PC-3 (cell line): ENCODE measurements at regions of chr1 and their contacts with region 1.

Region 1: DNA sequence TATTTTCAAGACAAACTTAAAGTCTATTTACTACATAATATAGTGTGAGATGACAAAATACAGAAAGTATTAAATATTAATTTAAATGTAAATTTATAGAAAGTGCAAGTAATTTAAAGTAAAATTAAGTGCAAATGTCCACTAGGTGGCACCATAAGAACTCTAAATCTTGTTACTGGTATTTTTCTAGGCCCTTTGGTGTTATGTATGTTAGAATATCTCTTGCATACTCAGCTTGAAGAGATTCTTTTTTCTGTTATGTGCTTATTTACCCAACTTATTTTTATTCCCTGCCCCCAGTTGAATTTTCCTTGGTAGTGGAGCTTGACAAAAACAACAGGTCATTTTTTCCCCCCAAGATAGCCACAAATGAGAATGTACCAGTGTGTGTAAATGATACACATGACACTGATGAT is 71.5 kb downstream of the RPS6KC1 start:
- DNase-seq: peak; percentile 89
- ATAC-seq: no peak
- H3K4me3 ChIP-seq: no peak overlapping the region
- H3K27ac ChIP-seq: no peak overlapping the region
- H3K4me1 ChIP-seq: peaks cover 62% of the 10 kb centered on the region
- H3K27me3 ChIP-seq: no peaks in the 10 kb centered on the region
- CTCF ChIP-seq: peak; percentile 74

Region 2: DNA sequence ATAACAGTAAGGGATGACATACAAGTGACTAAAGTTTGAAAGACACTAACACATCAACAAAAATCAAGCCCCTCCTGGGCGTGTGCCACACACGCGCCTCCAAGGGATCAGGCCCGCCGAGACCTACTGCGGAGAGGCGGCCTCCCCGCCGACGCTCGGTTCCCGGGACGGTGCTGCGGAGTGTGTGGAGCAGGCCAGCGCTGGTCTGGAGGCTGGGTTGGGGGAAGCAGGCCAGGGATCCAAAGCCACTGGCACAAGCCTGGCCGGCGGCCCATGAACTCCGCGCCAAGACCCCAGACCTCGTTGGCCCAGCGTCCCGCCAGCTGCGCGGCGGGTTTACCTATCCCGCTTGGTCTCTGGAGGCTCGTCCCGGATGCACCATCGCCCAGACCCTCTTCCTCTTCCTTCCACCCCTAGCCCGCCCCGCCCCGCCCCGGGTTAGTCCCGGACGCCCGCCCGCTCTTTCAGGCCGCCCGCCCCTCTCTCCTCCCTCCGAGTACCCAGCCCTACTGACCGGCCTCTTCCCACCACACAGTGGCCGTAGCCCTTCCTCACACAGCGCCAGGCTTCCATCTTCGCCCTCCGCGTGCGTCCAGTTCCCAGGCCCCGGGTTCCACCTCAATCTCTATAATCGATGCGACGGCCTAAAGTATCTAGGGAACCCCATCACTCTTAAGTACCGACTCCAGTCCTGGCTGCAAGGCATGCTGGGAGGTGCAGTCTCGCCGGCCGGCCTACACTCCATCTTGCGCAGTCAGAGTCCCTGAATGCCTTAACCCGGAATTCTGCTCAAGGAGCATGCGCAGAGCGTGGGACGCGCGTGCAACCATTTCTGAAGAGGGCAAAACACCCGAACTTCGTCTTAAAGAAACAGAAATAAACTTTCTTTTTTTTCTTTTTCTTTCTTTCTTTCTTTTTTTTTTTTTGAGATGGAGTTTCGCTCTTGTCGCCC is 107.1 kb before region 1 on chr1 and contains the start of gene ANGEL2:
- CTCF ChIA-PET with region 1: no interaction called
- POLR2A ChIA-PET with region 1: no interaction called
- intact Hi-C with region 1: loop called (anchors 5 kb)
- DNase-seq: peak; percentile 99
- ATAC-seq: peak; percentile 87
- H3K4me3 ChIP-seq: peak within 1 kb of the TSS; percentile 89
- H3K27ac ChIP-seq: peak within 1 kb of the TSS; percentile 69
- H3K4me1 ChIP-seq: peaks cover 43% of the 10 kb centered on the region
- H3K27me3 ChIP-seq: no peaks in the 10 kb centered on the region
- CTCF ChIP-seq: no peak
- total RNA-seq, gene ANGEL2: 27.0 and 36.8 TPM in 2 replicates

Region 3: GRCh38 chr1:213244664-213245091 is 122.2 kb after region 1 on chr1:
- CTCF ChIA-PET with region 1: no interaction called
- POLR2A ChIA-PET with region 1: no interaction called
- intact Hi-C with region 1: loop called (anchors 1 kb)
- DNase-seq: peak; percentile 75
- ATAC-seq: peak; percentile 70
- H3K4me3 ChIP-seq: no peak overlapping the region
- H3K27ac ChIP-seq: no peak overlapping the region
- H3K4me1 ChIP-seq: no peaks in the 10 kb centered on the region
- H3K27me3 ChIP-seq: no peaks in the 10 kb centered on the region
- CTCF ChIP-seq: peak; percentile 99

Region 4: DNA sequence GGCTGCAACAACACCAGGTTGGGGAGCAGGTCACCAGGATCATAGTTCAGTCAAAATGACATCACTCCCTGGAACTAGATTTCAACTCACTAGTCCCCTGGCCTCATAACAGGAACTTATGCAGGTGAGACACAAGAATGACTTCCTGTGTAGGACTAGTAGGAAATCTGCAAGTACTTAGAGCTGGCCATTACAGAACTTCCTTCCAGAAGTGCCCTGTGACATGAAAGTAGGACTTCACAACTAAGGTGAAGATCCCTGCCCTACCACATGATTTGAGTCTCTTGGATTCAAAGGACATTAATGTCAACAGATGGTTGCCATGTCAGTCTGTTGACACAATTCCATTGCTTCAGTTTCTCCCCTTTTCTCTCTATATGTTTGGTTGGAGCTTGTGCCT is 151.6 kb after region 1 on chr1:
- CTCF ChIA-PET with region 1: no interaction called
- POLR2A ChIA-PET with region 1: no interaction called
- intact Hi-C with region 1: no loop called
- DNase-seq: no peak
- ATAC-seq: no peak
- H3K4me3 ChIP-seq: no peak overlapping the region
- H3K27ac ChIP-seq: no peak overlapping the region
- H3K4me1 ChIP-seq: no peaks in the 10 kb centered on the region
- H3K27me3 ChIP-seq: no peaks in the 10 kb centered on the region
- CTCF ChIP-seq: no peak

Region 5: GRCh38 chr1:213374369-213374768 is 251.8 kb after region 1 on chr1:
- CTCF ChIA-PET with region 1: no interaction called
- POLR2A ChIA-PET with region 1: no interaction called
- intact Hi-C with region 1: loop called (anchors 5 kb)
- DNase-seq: peak; percentile 90
- ATAC-seq: peak; percentile 86
- H3K4me3 ChIP-seq: no peak overlapping the region
- H3K27ac ChIP-seq: no peak overlapping the region
- H3K4me1 ChIP-seq: no peaks in the 10 kb centered on the region
- H3K27me3 ChIP-seq: peaks cover 29% of the 10 kb centered on the region; the same call in 1 of the 2 replicates
- CTCF ChIP-seq: peak; percentile 100

Region 6: GRCh38 chr1:214123061-214123784 is 1000.7 kb after region 1 on chr1:
- CTCF ChIA-PET with region 1: no interaction called
- POLR2A ChIA-PET with region 1: no interaction called
- intact Hi-C with region 1: loop called (anchors 2 kb)
- DNase-seq: peak; percentile 86
- ATAC-seq: peak; percentile 96
- H3K4me3 ChIP-seq: no peak overlapping the region
- H3K27ac ChIP-seq: no peak overlapping the region
- H3K4me1 ChIP-seq: peaks cover 11% of the 10 kb centered on the region
- H3K27me3 ChIP-seq: peaks cover 33% of the 10 kb centered on the region; the same call in 1 of the 2 replicates
- CTCF ChIP-seq: peak; percentile 89